Stomach (tissue), 19 donors: ENCODE measurements at regions of chr1 and their contacts with region 1.

Region 1: GRCh38 chr1:2044510-2045319 is 5.5 kb upstream of the PRKCZ start:
- DNase-seq: peak; percentile 79 to 92
- H3K4me3 ChIP-seq: peak overlapping the region; percentile 28 to 45 (median 32)
- H3K27ac ChIP-seq: peak overlapping the region in 1 of 5 donors; percentile 58
- H3K4me1 ChIP-seq: peaks cover 10 to 56% (median 39%) of the 10 kb centered on the region in 4 donors
- H3K27me3 ChIP-seq: peaks cover 3 to 85% (median 34%) of the 10 kb centered on the region in 3 donors
- CTCF ChIP-seq: peak in 5 of 7 experiments; percentile 57 to 94 (median 79)
- EP300 ChIP-seq: no peak
- POLR2A ChIP-seq: no peak

Region 2: DNA sequence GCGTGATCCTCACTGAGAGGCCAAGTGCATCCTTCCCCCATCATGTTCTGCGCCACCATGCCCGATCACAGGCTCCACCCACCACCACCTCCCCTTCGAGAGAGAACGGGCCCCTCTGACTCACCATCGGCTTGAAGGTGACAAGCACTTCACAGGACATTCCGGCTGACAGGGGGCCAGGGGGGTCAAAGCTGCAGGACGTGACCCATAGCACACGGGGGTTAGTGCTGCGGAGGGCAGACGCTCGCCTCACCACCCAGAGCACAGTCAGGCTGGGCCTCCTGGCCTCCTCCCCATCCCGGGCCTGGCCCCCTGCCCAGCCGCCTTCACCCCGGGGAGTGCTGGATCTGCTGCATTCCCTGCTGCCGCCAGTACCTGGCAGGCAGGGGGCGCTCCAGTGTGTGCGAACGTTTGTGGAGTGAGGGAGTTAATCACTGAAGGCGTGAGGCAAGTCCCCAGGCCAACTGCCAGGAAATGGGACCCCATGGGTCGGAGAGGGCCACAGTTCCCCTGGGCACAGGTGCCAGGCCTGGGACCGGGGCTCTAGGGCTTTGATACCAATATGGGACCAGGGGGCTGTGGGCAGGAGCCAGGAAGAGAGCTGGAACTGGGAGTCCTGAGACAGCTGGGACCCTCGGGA is 84.8 kb before region 1 on chr1:
- intact Hi-C with region 1: loop called (anchors 5 kb)
- DNase-seq: peak; percentile 88 to 93
- H3K4me3 ChIP-seq: no peak overlapping the region
- H3K27ac ChIP-seq: no peak overlapping the region
- H3K4me1 ChIP-seq: peaks cover 0 to 11% (median 9%) of the 10 kb centered on the region in 4 donors
- H3K27me3 ChIP-seq: peaks cover 0 to 79% (median 23%) of the 10 kb centered on the region in 3 donors
- CTCF ChIP-seq: peak in 5 of 7 experiments; percentile 53 to 81 (median 67)
- EP300 ChIP-seq: no peak
- POLR2A ChIP-seq: no peak

Region 3: GRCh38 chr1:2148691-2149090 is 104.0 kb after region 1 on chr1:
- intact Hi-C with region 1: no loop called
- DNase-seq: peak; percentile 38 to 70
- H3K4me3 ChIP-seq: no peak overlapping the region
- H3K27ac ChIP-seq: peak overlapping the region in 3 of 5 donors; percentile 55 to 80 (median 62)
- H3K4me1 ChIP-seq: peaks cover 0 to 5% (median 0%) of the 10 kb centered on the region in 4 donors
- H3K27me3 ChIP-seq: no peaks in the 10 kb centered on the region
- CTCF ChIP-seq: no peak
- EP300 ChIP-seq: no peak
- POLR2A ChIP-seq: no peak

Region 4: GRCh38 chr1:2438038-2438437 is 393.3 kb after region 1 on chr1:
- intact Hi-C with region 1: no loop called
- DNase-seq: no peak
- H3K4me3 ChIP-seq: no peak overlapping the region
- H3K27ac ChIP-seq: no peak overlapping the region
- H3K4me1 ChIP-seq: peaks cover 0 to 3% (median 1%) of the 10 kb centered on the region in 4 donors
- H3K27me3 ChIP-seq: peaks cover 9 to 90% (median 40%) of the 10 kb centered on the region in 3 donors
- CTCF ChIP-seq: no peak
- EP300 ChIP-seq: no peak
- POLR2A ChIP-seq: no peak